WTC11 (cell line): ENCODE measurements at regions of chr18 and their contacts with region 1.

Region 1: DNA sequence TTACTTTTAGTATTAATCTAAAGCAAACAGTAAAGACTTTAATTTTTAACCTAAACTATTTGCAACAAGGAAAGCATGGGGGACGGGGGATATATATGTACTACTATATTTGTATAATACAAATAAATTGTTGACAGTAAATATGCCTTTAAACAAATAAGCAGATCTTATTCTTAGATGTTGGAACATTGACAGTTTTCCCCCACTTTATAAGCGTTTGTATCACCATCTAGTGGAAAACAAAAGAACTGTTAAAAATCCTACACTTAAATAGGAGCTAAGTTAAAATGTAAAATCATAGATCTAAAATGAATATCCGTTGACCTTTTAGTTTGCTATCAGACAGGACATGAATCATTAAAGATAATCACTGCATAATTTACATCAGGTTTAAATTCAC is 50.0 kb downstream of the RBBP8 start:
- DNase-seq: no peak
- ATAC-seq: no peak
- H3K4me3 Mint-ChIP-seq: no peak overlapping the region
- H3K27ac Mint-ChIP-seq: no peak overlapping the region
- H3K4me1 Mint-ChIP-seq: peaks cover 15% of the 10 kb centered on the region
- H3K27me3 Mint-ChIP-seq: no peaks in the 10 kb centered on the region
- CTCF ChIP-seq: 0 out of 2 replicates have a peak, but pooled peaks have one; percentile 26

Region 2: DNA sequence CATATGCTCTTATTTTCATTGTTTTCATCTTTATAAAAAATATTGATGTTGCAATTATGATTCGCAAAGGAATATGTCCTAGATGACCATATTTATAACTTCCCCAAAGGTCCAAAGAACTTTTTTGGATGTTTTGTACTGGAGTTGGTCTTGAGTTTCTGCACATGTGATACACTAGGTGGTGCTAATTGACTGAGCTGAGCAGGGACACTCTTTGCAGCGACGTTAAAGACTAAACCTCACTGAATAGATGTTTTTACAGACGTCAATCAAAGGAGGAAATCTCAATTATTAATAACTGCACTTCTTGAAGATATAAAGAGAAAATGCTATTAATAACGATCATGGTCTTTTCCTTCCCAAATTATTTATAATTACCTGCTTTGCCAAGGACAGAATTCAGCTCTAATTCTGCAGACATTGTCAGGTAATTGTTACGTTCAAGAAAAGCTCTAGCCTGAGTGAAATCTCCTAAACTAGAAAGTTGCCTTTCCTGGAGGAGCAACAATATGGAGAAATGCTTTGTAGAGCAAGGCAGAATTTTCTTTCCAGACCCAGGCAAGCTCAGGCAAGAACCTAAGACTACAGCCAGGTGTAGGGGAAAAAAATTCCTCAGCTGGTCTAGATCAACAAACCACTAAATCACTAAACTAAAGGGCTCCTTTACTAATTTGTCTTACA is 169.4 kb before region 1 on chr18:
- CTCF ChIA-PET with region 1: interaction called, 37 read pairs
- POLR2A ChIA-PET with region 1: no interaction called
- DNase-seq: no peak
- ATAC-seq: peak; percentile 80
- H3K4me3 Mint-ChIP-seq: no peak overlapping the region
- H3K27ac Mint-ChIP-seq: no peak overlapping the region
- H3K4me1 Mint-ChIP-seq: peaks cover 13% of the 10 kb centered on the region
- H3K27me3 Mint-ChIP-seq: no peaks in the 10 kb centered on the region
- CTCF ChIP-seq: no peak; the same call in 1 of the 2 replicates

Region 3: DNA sequence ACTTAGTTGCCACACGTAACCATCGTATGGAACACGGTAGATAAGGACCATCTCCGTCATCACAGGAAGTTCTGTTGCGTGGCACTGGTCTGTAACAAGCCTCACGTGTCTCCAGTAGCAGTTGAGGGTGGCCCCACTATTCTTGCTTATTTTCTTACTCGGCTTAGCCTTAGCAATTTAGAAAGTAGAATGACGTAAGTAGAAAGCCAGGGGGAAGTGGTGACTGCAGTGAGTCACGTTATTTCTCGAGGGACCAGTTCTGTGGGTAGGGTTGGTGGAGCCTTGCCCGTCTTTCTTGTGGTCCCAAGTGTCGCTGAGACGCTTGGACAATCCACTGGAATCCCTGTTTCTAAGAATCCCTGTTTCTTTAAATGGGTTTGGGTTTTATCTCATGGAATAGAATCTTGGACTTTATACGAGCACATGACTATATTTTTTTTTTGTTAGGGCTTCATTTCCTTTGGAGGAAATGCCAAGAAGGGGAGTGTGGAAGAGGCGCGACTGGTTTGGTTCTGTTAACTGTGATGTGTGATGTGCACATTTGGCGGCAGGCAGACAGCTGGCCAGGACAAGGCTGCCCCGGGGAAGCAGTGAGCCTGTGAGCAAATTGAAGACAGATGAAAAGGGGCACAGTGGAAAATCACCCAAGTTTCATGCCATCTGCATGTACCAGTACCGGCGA is 248.3 kb after region 1 on chr18:
- CTCF ChIA-PET with region 1: no interaction called
- POLR2A ChIA-PET with region 1: no interaction called
- DNase-seq: no peak
- ATAC-seq: no peak
- H3K4me3 Mint-ChIP-seq: no peak overlapping the region
- H3K27ac Mint-ChIP-seq: peak overlapping the region; percentile 2; the same call in 1 of the 2 replicates
- H3K4me1 Mint-ChIP-seq: peaks cover 37% of the 10 kb centered on the region
- H3K27me3 Mint-ChIP-seq: no peaks in the 10 kb centered on the region
- CTCF ChIP-seq: no peak

Region 4: GRCh38 chr18:23412351-23412964 is 429.3 kb after region 1 on chr18:
- CTCF ChIA-PET with region 1: interaction called, 11 read pairs
- POLR2A ChIA-PET with region 1: no interaction called
- DNase-seq: no peak
- ATAC-seq: no peak
- H3K4me3 Mint-ChIP-seq: no peak overlapping the region
- H3K27ac Mint-ChIP-seq: no peak overlapping the region
- H3K4me1 Mint-ChIP-seq: no peaks in the 10 kb centered on the region
- H3K27me3 Mint-ChIP-seq: no peaks in the 10 kb centered on the region
- CTCF ChIP-seq: no peak